B cell (primary cell): ENCODE measurements at regions of chr22 and their contacts with region 1.

Region 1: DNA sequence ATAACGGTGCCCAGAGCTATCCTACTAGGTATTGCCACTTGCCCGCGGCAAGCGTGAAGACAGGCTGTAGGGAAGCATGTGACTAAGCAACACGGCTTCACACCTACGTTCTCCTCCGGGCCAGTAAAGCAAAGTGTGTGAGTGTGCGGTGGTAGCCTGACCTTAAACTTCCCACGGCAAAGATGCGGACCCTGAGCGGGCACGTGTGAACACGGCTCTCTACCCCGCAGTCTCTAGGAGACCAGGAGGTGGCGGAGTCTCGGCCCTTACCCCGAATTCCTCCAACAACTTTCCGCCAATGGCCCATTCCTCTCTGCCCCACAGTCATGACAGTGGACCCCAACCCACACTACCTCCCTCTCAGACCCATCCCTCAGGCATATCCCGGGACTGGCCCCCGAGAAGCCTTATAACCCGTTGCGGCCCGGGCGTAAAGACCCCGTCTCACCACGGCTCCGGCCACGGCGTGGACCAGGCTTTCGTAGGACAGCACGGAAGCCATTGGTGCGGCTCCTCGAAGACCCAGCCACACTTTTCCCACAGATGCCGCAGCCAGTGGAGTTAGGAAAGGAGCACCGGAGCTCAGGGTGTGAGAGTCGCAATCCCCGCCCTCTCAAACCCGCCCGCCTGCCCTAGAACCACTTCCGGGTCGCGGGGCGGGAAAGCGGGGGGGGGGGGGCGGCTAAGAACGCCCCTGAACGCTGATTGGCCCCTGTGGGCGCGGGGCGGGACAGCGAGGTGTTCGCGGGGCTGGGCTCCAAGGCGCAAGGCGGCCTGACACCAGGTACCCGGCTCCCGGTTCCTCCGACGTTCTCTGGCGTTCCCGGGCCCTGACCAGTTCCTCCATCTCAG is at the start of gene SLC25A17:
- DNase-seq: peak; percentile 89
- ATAC-seq: peak; percentile 92
- H3K4me3 ChIP-seq: peak within 1 kb of the TSS; percentile 74 to 100 (median 98)
- H3K4me3 Mint-ChIP-seq: peak within 1 kb of the TSS; percentile 95
- H3K27ac ChIP-seq: peak within 1 kb of the TSS; percentile 59 to 75
- H3K27ac Mint-ChIP-seq: peak within 1 kb of the TSS; percentile 91
- H3K4me1 ChIP-seq: peaks cover 22 to 27% of the 10 kb centered on the region in 2 donors
- H3K4me1 Mint-ChIP-seq: peaks cover 34% of the 10 kb centered on the region
- H3K27me3 ChIP-seq: no peaks in the 10 kb centered on the region
- H3K27me3 Mint-ChIP-seq: no peaks in the 10 kb centered on the region
- CTCF ChIP-seq: peak; percentile 44
- total RNA-seq, gene SLC25A17: 13.4 and 15.0 TPM in 2 replicates

Region 2: DNA sequence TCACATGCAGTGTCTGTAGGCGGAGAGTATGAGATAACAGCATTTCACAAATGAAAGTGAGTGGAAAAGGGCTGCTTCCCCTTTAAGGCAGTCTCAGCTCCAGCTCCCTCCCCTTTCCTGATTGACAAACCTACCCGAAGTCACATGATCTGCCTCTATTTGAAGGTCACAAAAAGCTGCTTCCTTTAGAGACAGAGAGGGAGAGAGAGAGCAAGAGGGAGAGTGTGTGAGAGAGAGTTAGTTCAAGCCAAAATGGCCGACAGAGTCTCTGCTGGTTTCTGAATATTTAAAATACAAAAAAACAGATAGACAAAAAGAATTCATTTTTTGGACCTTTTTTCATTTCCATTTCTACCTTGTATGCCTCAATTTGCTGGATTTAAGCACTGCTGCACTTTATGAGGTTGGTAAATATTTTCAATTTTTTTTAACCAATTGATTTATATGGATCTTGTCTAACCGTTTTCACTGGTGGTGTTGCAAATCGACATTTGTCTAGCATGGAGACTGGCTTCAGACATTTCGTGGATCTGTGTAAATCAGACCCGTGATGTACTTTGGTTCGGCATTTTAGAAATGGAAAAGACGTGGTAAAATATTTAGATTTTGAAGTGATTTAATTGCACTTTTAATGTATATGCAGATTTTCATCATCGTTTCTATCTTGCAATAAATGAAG is 641.1 kb before region 1 on chr22 and contains the start of gene TNRC6B:
- CTCF ChIA-PET with region 1: no interaction called
- POLR2A ChIA-PET with region 1: no interaction called
- intact Hi-C with region 1: loop called (anchors 2 kb)
- DNase-seq: peak; percentile 93
- ATAC-seq: peak; percentile 90
- H3K4me3 ChIP-seq: peak within 1 kb of the TSS; percentile 56 to 100 (median 72)
- H3K4me3 Mint-ChIP-seq: peak within 1 kb of the TSS; percentile 84
- H3K27ac ChIP-seq: peak within 1 kb of the TSS; percentile 65 to 79
- H3K27ac Mint-ChIP-seq: peak within 1 kb of the TSS; percentile 84
- H3K4me1 ChIP-seq: peaks cover 41 to 42% of the 10 kb centered on the region in 2 donors
- H3K4me1 Mint-ChIP-seq: peaks cover 61% of the 10 kb centered on the region
- H3K27me3 ChIP-seq: no peaks in the 10 kb centered on the region
- H3K27me3 Mint-ChIP-seq: no peaks in the 10 kb centered on the region
- CTCF ChIP-seq: no peak
- total RNA-seq, gene TNRC6B: 210 and 248 TPM in 2 replicates

Region 3: GRCh38 chr22:40346178-40347118 is 472.5 kb before region 1 on chr22 and contains the start of gene ADSL:
- CTCF ChIA-PET with region 1: no interaction called
- POLR2A ChIA-PET with region 1: no interaction called
- intact Hi-C with region 1: loop called (anchors 2 kb)
- DNase-seq: peak; percentile 91
- ATAC-seq: peak; percentile 89
- H3K4me3 ChIP-seq: peak within 1 kb of the TSS; percentile 84 to 92 (median 88)
- H3K4me3 Mint-ChIP-seq: peak within 1 kb of the TSS; percentile 98
- H3K27ac ChIP-seq: peak within 1 kb of the TSS; percentile 74 to 75
- H3K27ac Mint-ChIP-seq: peak within 1 kb of the TSS; percentile 97
- H3K4me1 ChIP-seq: peaks cover 11 to 27% of the 10 kb centered on the region in 2 donors
- H3K4me1 Mint-ChIP-seq: peaks cover 32% of the 10 kb centered on the region
- H3K27me3 ChIP-seq: no peaks in the 10 kb centered on the region
- H3K27me3 Mint-ChIP-seq: no peaks in the 10 kb centered on the region
- CTCF ChIP-seq: no peak
- total RNA-seq, gene ADSL: 56.3 and 63.8 TPM in 2 replicates

Region 4: GRCh38 chr22:40679964-40680818 is 138.8 kb before region 1 on chr22:
- CTCF ChIA-PET with region 1: interaction called, 14 read pairs
- POLR2A ChIA-PET with region 1: no interaction called
- intact Hi-C with region 1: no loop called
- DNase-seq: no peak
- ATAC-seq: no peak
- H3K4me3 ChIP-seq: no peak overlapping the region
- H3K4me3 Mint-ChIP-seq: no peak overlapping the region
- H3K27ac ChIP-seq: no peak overlapping the region
- H3K27ac Mint-ChIP-seq: no peak overlapping the region
- H3K4me1 ChIP-seq: peaks cover 4 to 7% of the 10 kb centered on the region in 2 donors
- H3K4me1 Mint-ChIP-seq: peaks cover 10% of the 10 kb centered on the region
- H3K27me3 ChIP-seq: peaks cover 0 to 22% (median 10%) of the 10 kb centered on the region in 4 experiments
- H3K27me3 Mint-ChIP-seq: peaks cover 29% of the 10 kb centered on the region
- CTCF ChIP-seq: no peak

Region 5: GRCh38 chr22:40764763-40765441 is 54.1 kb before region 1 on chr22:
- CTCF ChIA-PET with region 1: interaction called, 3 read pairs
- POLR2A ChIA-PET with region 1: no interaction called
- intact Hi-C with region 1: loop called (anchors 5 kb)
- DNase-seq: peak; percentile 77
- ATAC-seq: peak; percentile 94
- H3K4me3 ChIP-seq: peak overlapping the region in 4 of 5 experiments; percentile 23 to 42 (median 28)
- H3K4me3 Mint-ChIP-seq: peak overlapping the region; percentile 71
- H3K27ac ChIP-seq: peak overlapping the region; percentile 81 to 84
- H3K27ac Mint-ChIP-seq: peak overlapping the region; percentile 93
- H3K4me1 ChIP-seq: peaks cover 37 to 44% of the 10 kb centered on the region in 2 donors
- H3K4me1 Mint-ChIP-seq: peaks cover 43% of the 10 kb centered on the region
- H3K27me3 ChIP-seq: no peaks in the 10 kb centered on the region
- H3K27me3 Mint-ChIP-seq: no peaks in the 10 kb centered on the region
- CTCF ChIP-seq: no peak

Region 6: GRCh38 chr22:40856513-40857308 is 37.7 kb after region 1 on chr22 and contains the starts of genes ST13 and XPNPEP3:
- CTCF ChIA-PET with region 1: interaction called, 3 read pairs
- POLR2A ChIA-PET with region 1: interaction called, 3 read pairs
- intact Hi-C with region 1: loop called (anchors 1 kb)
- DNase-seq: peak; percentile 98
- ATAC-seq: peak; percentile 88
- H3K4me3 ChIP-seq: peak within 1 kb of the TSS; percentile 82 to 98 (median 94)
- H3K4me3 Mint-ChIP-seq: peak within 1 kb of the TSS; percentile 97
- H3K27ac ChIP-seq: peak within 1 kb of the TSS; percentile 91 to 94
- H3K27ac Mint-ChIP-seq: peak within 1 kb of the TSS; percentile 100
- H3K4me1 ChIP-seq: peaks cover 24 to 28% of the 10 kb centered on the region in 2 donors
- H3K4me1 Mint-ChIP-seq: peaks cover 46% of the 10 kb centered on the region
- H3K27me3 ChIP-seq: no peaks in the 10 kb centered on the region
- H3K27me3 Mint-ChIP-seq: no peaks in the 10 kb centered on the region
- CTCF ChIP-seq: peak; percentile 71
- total RNA-seq, gene ST13: 175 and 187 TPM in 2 replicates
- total RNA-seq, gene XPNPEP3: 18.9 and 24.2 TPM in 2 replicates

Region 7: DNA sequence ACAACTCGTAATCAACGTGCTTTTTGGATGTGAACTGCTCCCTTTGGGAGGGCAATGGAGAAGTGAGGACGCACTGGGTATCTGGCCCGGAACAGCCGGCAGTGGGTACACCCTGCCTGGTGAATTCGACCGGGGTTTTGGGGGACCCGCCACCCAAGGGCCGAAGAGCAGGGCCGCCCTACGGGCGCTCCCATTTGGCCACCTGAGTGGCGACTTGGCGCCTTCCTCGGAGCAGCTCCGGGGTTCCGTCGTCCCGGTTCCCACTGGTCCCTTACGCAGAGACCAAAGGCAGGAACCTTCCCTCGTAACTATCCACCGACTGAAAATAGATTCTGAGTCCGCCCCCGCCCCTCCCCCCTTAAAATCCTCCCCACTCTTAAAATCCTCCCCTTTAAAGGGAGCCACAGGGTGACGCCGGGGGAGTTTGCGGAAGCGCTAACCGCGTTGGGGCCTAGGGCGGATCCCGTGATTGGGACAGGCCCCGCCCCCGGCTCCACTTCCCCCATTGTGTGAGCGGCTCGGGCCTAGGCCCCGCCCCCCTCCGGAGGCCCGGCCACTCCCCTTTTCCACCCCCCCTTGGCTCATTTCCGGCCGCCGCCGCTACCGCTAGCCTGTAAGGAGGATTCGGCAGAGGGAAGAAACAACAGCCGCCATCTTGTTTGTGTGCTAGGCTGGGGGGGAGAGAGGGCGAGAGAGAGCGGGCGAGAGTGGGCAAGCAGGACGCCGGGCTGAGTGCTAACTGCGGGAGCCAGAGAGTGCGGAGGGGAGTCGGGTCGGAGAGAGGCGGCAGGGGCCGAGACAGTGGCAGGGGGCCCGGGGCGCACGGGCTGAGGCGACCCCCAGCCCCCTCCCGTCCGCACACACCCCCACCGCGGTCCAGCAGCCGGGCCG is 272.4 kb after region 1 on chr22:
- CTCF ChIA-PET with region 1: no interaction called
- POLR2A ChIA-PET with region 1: no interaction called
- intact Hi-C with region 1: loop called (anchors 5 kb)
- DNase-seq: peak; percentile 99
- ATAC-seq: peak; percentile 81
- H3K4me3 ChIP-seq: peak overlapping the region; percentile 74 to 100 (median 92)
- H3K4me3 Mint-ChIP-seq: peak overlapping the region; percentile 98
- H3K27ac ChIP-seq: peak overlapping the region; percentile 97 to 99
- H3K27ac Mint-ChIP-seq: peak overlapping the region; percentile 100
- H3K4me1 ChIP-seq: peaks cover 25% of the 10 kb centered on the region in 2 donors
- H3K4me1 Mint-ChIP-seq: peaks cover 32% of the 10 kb centered on the region
- H3K27me3 ChIP-seq: no peaks in the 10 kb centered on the region
- H3K27me3 Mint-ChIP-seq: no peaks in the 10 kb centered on the region
- CTCF ChIP-seq: no peak